PC-9 (cell line): ENCODE measurements at regions of chr17 and their contacts with region 1.

Region 1: GRCh38 chr17:74234486-74234885 is 21.1 kb downstream of the TTYH2 start:
- DNase-seq: no peak
- H3K4me3 ChIP-seq: no peak overlapping the region
- H3K27ac ChIP-seq: no peak overlapping the region
- H3K4me1 ChIP-seq: 0 out of 2 replicates have a peak, but pooled peaks cover under 1% of the 10 kb centered on the region
- H3K27me3 ChIP-seq: peaks cover 82% of the 10 kb centered on the region
- CTCF ChIP-seq: no peak

Region 2: DNA sequence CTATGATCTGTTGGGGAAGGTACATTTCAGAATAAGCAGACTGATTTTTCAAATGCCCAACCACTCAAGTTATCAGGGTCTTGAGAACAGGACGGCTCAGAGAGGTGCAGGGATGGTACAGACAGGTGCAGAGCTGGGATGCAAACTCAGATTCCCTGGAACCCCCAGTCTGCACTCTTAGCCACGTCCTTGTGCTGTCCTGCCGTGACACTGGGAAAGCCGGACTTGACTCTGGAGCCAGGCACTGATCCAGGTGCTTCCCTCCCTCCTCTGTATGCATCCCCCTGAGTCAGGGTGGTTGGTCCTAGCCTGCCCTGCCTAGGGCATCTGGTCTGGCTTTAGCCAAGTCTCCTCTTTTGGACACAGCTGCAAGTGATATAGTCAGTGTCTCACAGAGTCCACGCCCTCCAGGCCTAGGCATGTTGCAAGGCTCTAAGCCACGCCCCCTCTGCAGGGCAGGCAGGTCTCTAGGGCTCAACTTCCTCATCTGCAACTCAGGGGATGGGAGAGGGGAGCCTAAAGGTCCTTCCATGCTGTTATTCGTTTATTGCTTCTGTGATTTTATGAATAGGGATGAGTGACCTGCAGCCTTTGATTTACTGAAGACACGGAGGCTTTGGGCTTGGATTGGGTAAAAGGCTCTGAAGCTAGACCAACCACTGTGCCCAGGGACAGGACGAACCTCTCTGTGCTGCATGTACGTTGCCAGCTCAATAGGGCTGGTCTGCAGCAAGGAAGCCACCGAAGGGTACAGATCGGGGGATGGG is 687.5 kb before region 1 on chr17:
- CTCF ChIA-PET with region 1: no interaction called
- POLR2A ChIA-PET with region 1: no interaction called
- intact Hi-C with region 1: no loop called
- DNase-seq: peak in 1 of 2 experiments; percentile 6
- H3K4me3 ChIP-seq: no peak overlapping the region
- H3K27ac ChIP-seq: no peak overlapping the region
- H3K4me1 ChIP-seq: no peaks in the 10 kb centered on the region
- H3K27me3 ChIP-seq: peaks cover 100% of the 10 kb centered on the region
- CTCF ChIP-seq: no peak

Region 3: GRCh38 chr17:73936908-73937627 is 297.4 kb before region 1 on chr17:
- CTCF ChIA-PET with region 1: no interaction called
- POLR2A ChIA-PET with region 1: no interaction called
- intact Hi-C with region 1: no loop called
- DNase-seq: no peak
- H3K4me3 ChIP-seq: no peak overlapping the region
- H3K27ac ChIP-seq: no peak overlapping the region
- H3K4me1 ChIP-seq: no peaks in the 10 kb centered on the region
- H3K27me3 ChIP-seq: peaks cover 88% of the 10 kb centered on the region
- CTCF ChIP-seq: no peak

Region 4: GRCh38 chr17:74203439-74204240 is 30.8 kb before region 1 on chr17 and contains the start of gene RPL38:
- CTCF ChIA-PET with region 1: interaction called, 16 read pairs
- POLR2A ChIA-PET with region 1: no interaction called
- intact Hi-C with region 1: no loop called
- DNase-seq: peak; percentile 90 to 91
- H3K4me3 ChIP-seq: peak within 1 kb of the TSS; percentile 93
- H3K27ac ChIP-seq: peak within 1 kb of the TSS; percentile 80
- H3K4me1 ChIP-seq: peaks cover 17% of the 10 kb centered on the region
- H3K27me3 ChIP-seq: peaks cover 46% of the 10 kb centered on the region
- CTCF ChIP-seq: peak; percentile 89
- total RNA-seq, gene RPL38: 761 and 961 TPM in 2 replicates